ENCODE measurements at regions of chr9 and their contacts with region 1.

Region 1: DNA sequence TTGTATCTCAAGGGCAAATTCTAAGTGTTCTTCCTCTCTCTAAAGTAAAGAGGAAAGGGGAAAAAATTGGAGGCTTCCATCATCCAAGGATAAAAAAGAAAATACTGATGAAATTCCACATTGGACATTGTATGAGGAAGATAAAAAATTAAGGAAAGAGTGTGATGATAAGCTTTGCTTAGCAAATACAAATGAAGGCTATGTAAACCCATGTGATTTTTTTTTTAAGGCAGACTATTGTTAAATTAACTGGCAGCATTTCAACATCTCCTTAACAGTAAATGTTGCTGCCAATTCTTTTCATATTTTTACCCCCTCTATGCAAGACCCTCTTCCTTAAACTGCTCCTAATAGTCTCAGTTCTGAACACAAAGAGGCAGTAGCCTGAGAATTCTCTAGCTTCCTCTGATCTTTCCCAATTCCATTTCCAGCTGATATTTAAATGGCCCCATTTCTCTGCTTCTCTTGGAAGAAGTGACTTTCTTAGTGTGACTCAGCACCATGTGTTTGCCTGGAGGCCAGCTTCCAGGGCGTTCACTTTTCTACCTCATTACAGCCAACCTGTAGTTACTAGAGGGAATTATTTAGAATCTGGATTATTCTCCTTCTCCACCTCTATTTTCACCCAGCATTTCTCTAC is 159.7 kb downstream of the TLE1 start:
- DNase-seq: peak; percentile 70
- H3K4me3 ChIP-seq: no peak overlapping the region
- H3K27ac ChIP-seq: peak overlapping the region in 1 of 4 donors; percentile 21
- H3K4me1 ChIP-seq: no peaks in the 10 kb centered on the region
- H3K27me3 ChIP-seq: no peaks in the 10 kb centered on the region
- CTCF ChIP-seq: no peak
- EP300 ChIP-seq: no peak
- POLR2A ChIP-seq: no peak

Region 2: DNA sequence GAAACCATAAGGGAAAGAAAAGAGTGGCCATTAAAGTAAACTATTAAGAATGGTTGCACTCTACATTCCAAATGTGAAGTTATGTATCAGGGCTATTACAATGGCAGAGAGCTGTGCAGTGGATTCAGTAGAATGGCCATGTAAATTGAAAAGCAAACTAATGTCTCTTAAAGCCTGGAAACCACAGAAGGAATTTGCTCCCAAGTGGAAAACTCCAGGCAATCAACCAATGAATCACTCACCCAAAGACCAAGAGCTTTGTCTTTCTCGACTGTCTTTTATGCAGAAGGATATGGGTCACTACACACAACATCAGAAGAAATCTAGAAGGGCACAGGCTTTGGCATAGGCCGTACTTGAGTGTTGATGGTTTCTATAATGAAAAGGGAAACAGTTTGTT is 44.7 kb after region 1 on chr9:
- intact Hi-C with region 1: no loop called
- DNase-seq: no peak
- H3K4me3 ChIP-seq: no peak overlapping the region
- H3K27ac ChIP-seq: no peak overlapping the region
- H3K4me1 ChIP-seq: no peaks in the 10 kb centered on the region
- H3K27me3 ChIP-seq: no peaks in the 10 kb centered on the region
- CTCF ChIP-seq: no peak
- EP300 ChIP-seq: no peak
- POLR2A ChIP-seq: no peak

Region 3: GRCh38 chr9:81656004-81656403 is 126.3 kb after region 1 on chr9:
- intact Hi-C with region 1: no loop called
- DNase-seq: no peak
- H3K4me3 ChIP-seq: no peak overlapping the region
- H3K27ac ChIP-seq: no peak overlapping the region
- H3K4me1 ChIP-seq: peaks cover 0 to 27% (median 17%) of the 10 kb centered on the region in 4 donors
- H3K27me3 ChIP-seq: no peaks in the 10 kb centered on the region
- CTCF ChIP-seq: no peak
- EP300 ChIP-seq: no peak
- POLR2A ChIP-seq: no peak

Region 4: DNA sequence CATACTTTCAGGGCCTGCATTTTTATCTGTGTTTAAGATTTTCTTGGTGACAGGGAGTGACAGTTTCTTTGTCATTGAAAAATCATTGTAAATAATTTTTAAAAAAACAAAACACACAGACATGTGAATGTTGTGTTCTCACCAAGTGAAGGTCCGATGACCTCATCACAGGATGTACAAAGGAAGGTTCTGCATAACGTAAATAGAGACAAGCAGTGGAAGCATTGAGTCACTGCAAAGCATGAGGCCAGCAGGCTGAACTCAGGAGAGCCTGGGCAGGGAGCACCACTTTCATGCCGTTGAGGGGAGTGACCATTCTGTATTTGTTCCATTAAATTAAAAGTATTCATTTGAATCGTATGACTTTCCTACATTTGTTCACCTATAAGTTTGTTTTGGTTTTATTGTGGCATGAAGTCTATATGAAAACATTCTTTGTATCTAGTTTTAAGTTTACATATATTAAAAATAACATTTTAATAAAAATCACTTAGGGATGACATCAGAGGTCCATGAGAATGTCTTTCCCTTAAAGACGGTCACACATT is 230.1 kb after region 1 on chr9:
- intact Hi-C with region 1: no loop called
- DNase-seq: no peak
- H3K4me3 ChIP-seq: no peak overlapping the region
- H3K27ac ChIP-seq: no peak overlapping the region
- H3K4me1 ChIP-seq: no peaks in the 10 kb centered on the region
- H3K27me3 ChIP-seq: no peaks in the 10 kb centered on the region
- CTCF ChIP-seq: no peak
- EP300 ChIP-seq: peak in 1 of 4 donors; percentile 40
- POLR2A ChIP-seq: no peak

Region 5: GRCh38 chr9:81848472-81848871 is 318.8 kb after region 1 on chr9:
- intact Hi-C with region 1: loop called (anchors 10 kb)
- DNase-seq: no peak
- H3K4me3 ChIP-seq: no peak overlapping the region
- H3K27ac ChIP-seq: no peak overlapping the region
- H3K4me1 ChIP-seq: peaks cover 0 to 15% (median 6%) of the 10 kb centered on the region in 4 donors
- H3K27me3 ChIP-seq: no peaks in the 10 kb centered on the region
- CTCF ChIP-seq: peak in 3 of 4 experiments; percentile 22 to 32 (median 29)
- EP300 ChIP-seq: no peak
- POLR2A ChIP-seq: no peak

Measured in sigmoid colon (tissue), 7 donors.